Aorta (tissue), 5 donors: ENCODE measurements at regions of chr7 and their contacts with region 1.

Region 1: DNA sequence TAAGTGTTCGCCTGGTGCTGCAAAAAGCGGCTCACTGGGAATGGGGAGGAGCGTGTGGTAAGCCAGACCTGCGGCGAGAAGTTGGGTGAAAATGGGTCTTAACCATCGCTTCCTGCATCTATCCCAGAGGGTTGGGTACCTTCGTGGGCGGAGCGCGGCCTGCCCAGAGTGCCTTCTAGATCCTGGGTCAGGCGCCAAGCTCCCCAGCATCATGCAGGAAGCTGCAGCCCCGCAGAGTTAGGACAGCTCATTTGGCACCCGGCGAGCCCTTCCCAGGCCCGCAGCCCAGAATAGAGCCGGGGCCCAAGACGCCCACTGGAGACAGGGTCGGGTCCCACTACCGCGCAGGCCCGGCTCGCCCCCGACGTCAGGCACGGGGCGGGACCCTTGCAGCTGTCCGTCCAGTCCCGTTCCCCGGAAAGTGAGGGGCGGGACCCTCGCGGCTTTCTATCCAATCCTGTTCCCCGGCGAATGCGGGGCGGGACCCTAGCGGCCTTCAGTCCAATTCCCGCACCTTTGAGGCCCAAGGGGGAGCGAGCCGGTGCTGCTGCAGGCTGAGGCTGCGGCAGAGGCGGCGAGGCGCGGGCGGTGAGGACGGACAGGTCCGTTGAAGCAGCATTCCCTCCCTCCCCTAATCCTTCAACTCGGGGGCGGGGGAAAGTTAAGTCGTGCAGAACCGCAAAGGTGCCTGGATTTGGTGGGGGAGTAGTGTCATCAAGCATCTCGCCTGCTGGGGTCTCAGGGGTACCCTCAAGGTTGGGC is at the start of gene CROT:
- DNase-seq: peak; percentile 98
- ATAC-seq: peak; percentile 100
- H3K4me3 ChIP-seq: peak within 1 kb of the TSS; percentile 74 to 78
- H3K27ac ChIP-seq: peak within 1 kb of the TSS; percentile 83 to 89
- H3K4me1 ChIP-seq: peaks cover 1 to 3% of the 10 kb centered on the region in 2 donors
- H3K27me3 ChIP-seq: no peaks in the 10 kb centered on the region
- total RNA-seq, gene CROT: 11.8 to 19.5 TPM

Region 2: DNA sequence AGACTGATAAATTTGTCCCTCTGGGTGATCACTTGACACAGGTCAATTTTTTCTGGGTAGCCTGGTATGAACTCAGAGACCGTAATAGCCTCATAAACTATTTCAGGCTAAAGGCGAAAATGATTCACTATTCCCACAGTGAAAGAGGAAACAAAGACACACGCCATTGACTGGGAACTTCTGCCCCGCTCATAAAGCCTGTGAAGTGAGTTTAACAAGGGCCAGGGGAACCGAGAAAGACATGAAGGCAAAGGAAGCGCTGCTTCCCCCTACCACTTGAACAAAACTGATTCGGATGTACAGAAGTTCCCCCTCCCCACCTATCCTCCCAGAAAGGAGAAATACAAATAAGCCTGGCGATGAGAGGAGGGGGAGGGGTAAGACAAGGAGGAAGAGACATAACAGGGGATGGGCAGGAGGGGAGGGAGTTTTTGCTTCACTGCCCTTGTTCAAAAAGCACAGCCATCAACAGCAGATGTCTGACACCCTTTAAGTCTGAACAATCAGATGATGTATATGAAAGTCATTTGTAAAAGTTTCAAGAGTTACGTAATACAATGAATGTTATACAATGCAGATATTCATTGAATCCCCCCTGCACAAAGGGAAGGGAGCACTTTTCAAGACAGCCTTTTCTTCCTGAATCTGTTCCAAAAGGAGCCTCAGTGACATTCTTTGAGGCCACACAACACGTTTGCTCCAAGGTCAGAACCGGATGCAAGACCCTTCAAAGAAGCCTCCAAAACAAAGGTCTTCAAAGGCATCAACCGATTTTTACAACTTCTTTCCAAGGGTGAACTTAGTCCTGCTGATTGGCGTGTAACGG is 129.4 kb after region 1 on chr7:
- intact Hi-C with region 1: loop called in 1 of 2 experiments (anchors 10 kb)
- DNase-seq: peak in 1 of 2 donors; percentile 49
- ATAC-seq: peak; percentile 84
- H3K4me3 ChIP-seq: peak overlapping the region; percentile 48 to 81
- H3K27ac ChIP-seq: peak overlapping the region; percentile 26 to 82
- H3K4me1 ChIP-seq: no peaks in the 10 kb centered on the region
- H3K27me3 ChIP-seq: no peaks in the 10 kb centered on the region